Heart left ventricle (tissue), 16 donors: ENCODE measurements at regions of chr7 and their contacts with region 1.

Region 1: GRCh38 chr7:57404343-57404953 is 45.5 kb upstream of the ZNF716 start:
- DNase-seq: peak; percentile 44 to 92 (median 76)
- ATAC-seq: peak; percentile 97 to 98 (median 98)
- H3K4me3 ChIP-seq: peak overlapping the region; percentile 15 to 65 (median 48)
- H3K27ac ChIP-seq: peak overlapping the region in 10 of 12 donors; percentile 24 to 86 (median 74)
- H3K4me1 ChIP-seq: no peaks in the 10 kb centered on the region
- H3K27me3 ChIP-seq: no peaks in the 10 kb centered on the region
- CTCF ChIP-seq: no peak
- POLR2A ChIP-seq: no peak

Region 2: GRCh38 chr7:57328457-57328856 is 76.0 kb before region 1 on chr7:
- intact Hi-C with region 1: loop called in 3 of 10 experiments (anchors 1 to 10 kb)
- DNase-seq: peak; percentile 81 to 95 (median 87)
- ATAC-seq: peak; percentile 94 to 98 (median 98)
- H3K4me3 ChIP-seq: no peak overlapping the region
- H3K27ac ChIP-seq: peak overlapping the region in 9 of 12 donors; percentile 28 to 82 (median 53)
- H3K4me1 ChIP-seq: peaks cover 0 to 3% (median 0%) of the 10 kb centered on the region in 12 donors
- H3K27me3 ChIP-seq: no peaks in the 10 kb centered on the region
- CTCF ChIP-seq: peak in 6 of 12 donors; percentile 12 to 47 (median 24)
- POLR2A ChIP-seq: no peak

Region 3: DNA sequence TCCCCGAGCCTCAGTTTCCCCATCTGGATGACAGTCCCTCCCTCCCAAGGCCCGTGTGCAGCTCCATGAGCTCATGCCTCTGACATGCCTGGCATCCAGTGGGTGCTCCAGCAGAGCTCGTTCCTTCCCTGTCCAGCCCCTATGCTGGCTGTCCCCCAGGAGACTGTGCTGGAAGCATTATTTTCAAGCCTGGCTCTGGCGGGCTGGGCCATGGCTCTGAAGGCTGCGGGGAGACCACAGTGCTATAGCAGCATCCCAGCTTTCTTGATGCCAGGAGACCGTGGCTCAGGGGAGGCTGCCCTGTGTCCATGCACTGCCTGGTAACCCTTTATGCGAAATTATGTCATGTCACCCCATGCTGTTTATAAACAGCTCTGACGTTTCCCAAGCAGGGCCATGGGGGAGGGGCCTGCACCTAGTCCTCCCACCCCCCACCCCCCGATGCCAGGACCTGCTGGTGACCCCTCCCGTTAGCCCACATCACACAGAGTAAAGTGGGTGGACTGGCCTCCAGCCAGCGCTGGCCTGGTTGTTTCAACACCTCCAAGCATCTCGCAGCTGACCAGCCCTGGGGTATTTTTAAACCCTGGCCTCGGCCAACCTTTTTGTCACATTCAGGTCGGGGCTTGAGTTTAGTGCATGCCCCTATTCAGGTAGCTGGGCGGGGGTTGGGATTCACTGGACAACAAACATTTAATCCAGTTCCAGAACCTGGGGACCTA is 60.4 kb before region 1 on chr7:
- intact Hi-C with region 1: loop called in 1 of 10 experiments (anchors 1 kb)
- DNase-seq: peak; percentile 74 to 92 (median 79)
- ATAC-seq: peak; percentile 79 to 88 (median 81)
- H3K4me3 ChIP-seq: no peak overlapping the region
- H3K27ac ChIP-seq: peak overlapping the region; percentile 58 to 90 (median 80)
- H3K4me1 ChIP-seq: peaks cover 0 to 28% (median 2%) of the 10 kb centered on the region in 12 donors
- H3K27me3 ChIP-seq: no peaks in the 10 kb centered on the region
- CTCF ChIP-seq: no peak
- POLR2A ChIP-seq: no peak

Region 4: GRCh38 chr7:57354679-57355338 is 49.6 kb before region 1 on chr7:
- intact Hi-C with region 1: loop called in 1 of 10 experiments (anchors 10 kb)
- DNase-seq: peak in 2 of 5 donors; percentile 59 to 66
- ATAC-seq: peak; percentile 85 to 95 (median 92)
- H3K4me3 ChIP-seq: peak overlapping the region in 1 of 12 donors; percentile 5
- H3K27ac ChIP-seq: peak overlapping the region in 10 of 12 donors; percentile 48 to 76 (median 61)
- H3K4me1 ChIP-seq: peaks cover 0 to 5% (median 0%) of the 10 kb centered on the region in 12 donors
- H3K27me3 ChIP-seq: no peaks in the 10 kb centered on the region
- CTCF ChIP-seq: no peak
- POLR2A ChIP-seq: no peak